Calu3 (cell line): ENCODE measurements at regions of chr15 and their contacts with region 1.

Region 1: DNA sequence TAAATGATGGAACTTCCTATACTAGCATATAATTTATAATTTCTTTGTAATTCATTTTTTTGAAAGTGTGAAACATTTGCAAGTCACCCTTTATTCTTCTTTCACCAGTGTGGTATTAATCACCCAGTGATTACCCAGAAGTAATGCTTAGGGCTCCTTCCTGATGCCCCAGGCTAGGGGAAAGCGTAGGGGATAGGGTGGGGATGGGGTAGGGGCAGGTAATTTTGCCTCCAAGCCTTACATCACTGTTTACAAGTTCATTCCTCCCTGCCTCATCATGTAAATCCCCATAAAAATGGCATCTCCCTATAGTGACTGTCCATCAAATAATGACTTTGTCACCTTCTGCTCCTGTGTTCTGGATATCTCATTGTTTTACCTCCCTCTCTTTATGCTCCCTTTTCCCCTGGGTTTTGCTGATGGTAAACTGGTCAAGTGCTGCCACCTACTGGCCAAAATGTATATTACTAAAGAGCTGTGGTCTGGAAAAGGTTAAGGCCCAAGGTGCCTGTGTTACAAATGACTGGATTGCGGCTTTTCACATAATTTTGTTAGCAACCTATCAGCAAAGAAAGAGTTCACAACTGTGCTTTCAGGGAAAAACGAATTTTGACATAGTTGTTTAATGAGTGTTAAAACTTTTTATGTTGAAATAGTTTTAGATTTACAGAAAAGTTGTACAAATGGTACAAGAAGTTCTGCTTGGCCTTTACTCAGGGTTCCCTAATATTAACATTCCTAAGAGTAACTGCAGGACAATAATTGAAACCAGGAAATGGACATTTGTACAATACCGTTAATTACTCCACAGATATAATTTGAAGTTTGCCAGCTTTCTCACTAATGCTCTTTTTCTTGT is 54.7 kb downstream of the ONECUT1 start:
- DNase-seq: peak; percentile 78
- H3K4me3 Mint-ChIP-seq: no peak overlapping the region
- H3K27ac Mint-ChIP-seq: no peak overlapping the region
- H3K4me1 Mint-ChIP-seq: peaks cover 2% of the 10 kb centered on the region
- H3K27me3 Mint-ChIP-seq: no peaks in the 10 kb centered on the region
- CTCF ChIP-seq: no peak

Region 2: DNA sequence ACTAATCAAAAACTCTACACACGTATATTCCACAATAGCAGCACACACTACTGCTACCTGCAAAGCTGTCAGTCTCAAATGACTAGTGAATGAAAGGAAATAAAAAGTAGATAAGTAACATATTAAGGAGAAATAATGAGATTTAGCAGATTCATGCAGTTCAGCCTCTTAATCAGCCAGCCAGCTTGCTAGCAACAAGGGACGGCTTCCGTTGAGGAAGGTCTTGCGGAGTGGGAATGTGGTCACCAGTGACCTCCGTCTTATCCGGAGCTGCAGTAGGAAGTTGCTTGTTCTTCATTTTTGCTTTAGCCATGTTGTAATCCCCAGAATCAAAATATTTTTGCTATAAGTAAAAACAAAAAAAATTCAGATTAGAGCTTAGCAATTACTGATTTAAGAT is 183.7 kb before region 1 on chr15:
- CTCF ChIA-PET with region 1: no interaction called
- intact Hi-C with region 1: no loop called
- DNase-seq: no peak
- H3K4me3 Mint-ChIP-seq: no peak overlapping the region
- H3K27ac Mint-ChIP-seq: no peak overlapping the region
- H3K4me1 Mint-ChIP-seq: no peaks in the 10 kb centered on the region
- H3K27me3 Mint-ChIP-seq: no peaks in the 10 kb centered on the region
- CTCF ChIP-seq: no peak

Region 3: DNA sequence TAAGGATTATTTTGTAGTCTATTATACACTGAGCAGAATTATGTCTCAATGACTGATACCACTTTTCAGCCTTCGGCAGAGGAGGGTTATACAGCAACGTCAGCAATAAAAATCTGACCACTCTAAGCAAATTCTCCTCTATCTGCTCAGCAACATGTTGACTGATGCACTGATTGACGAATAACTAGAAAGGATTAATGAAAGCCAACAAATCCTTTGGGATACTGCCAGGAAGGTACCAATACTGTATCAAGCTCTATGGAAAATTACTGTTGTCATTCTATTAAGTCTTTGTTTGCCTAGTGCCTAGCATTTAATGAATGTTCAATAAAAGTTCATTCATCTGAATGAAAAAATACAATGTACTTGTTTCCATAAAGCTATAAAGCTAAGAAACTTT is 171.9 kb before region 1 on chr15:
- CTCF ChIA-PET with region 1: no interaction called
- intact Hi-C with region 1: loop called (anchors 5 kb)
- DNase-seq: no peak
- H3K4me3 Mint-ChIP-seq: no peak overlapping the region
- H3K27ac Mint-ChIP-seq: no peak overlapping the region
- H3K4me1 Mint-ChIP-seq: peaks cover 15% of the 10 kb centered on the region
- H3K27me3 Mint-ChIP-seq: no peaks in the 10 kb centered on the region
- CTCF ChIP-seq: no peak

Region 4: DNA sequence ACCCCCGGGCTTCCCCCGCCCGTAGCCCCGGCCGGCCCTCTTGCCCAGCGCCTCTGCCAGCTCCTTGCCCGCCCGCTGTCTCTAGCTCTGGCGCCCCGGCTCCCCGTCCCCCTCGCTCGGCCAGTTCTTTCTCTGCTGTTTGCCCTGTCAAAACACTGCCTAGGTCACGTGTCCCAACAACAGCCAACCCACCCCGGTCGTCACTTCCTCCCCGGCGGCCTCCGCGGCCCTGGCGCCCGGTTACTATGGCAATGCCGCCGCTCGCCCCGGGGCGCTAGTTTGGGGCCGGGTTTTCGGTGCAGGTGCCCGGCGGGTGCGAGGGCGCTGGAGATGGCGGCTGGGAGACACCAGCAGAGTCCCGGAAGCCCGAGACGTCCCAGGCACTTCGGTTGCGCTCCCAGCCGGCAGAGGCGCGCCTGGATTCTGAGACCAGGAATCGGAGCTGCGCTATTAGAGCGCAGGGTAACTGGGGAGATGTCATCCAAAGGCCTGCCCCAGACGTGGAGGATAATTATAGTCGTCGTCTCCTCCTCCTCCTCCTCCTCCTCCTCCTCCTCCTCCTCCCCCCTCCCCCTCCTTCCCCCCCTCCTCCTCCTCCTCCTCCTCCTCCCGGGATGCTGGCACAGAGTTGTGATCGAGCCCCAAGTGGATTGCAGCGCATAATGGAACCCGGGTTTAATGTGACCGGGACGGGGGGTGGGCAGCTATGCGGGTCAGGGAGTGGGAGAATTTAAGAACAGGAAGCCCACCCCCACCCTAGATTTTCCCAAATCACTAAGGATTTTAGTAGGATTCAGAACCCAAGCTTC is 56.0 kb before region 1 on chr15 and contains the start of gene ATOSA:
- CTCF ChIA-PET with region 1: no interaction called
- intact Hi-C with region 1: no loop called
- DNase-seq: peak; percentile 90
- H3K4me3 Mint-ChIP-seq: peak within 1 kb of the TSS; percentile 100
- H3K27ac Mint-ChIP-seq: peak within 1 kb of the TSS; percentile 95
- H3K4me1 Mint-ChIP-seq: peaks cover 17% of the 10 kb centered on the region
- H3K27me3 Mint-ChIP-seq: no peaks in the 10 kb centered on the region
- CTCF ChIP-seq: no peak
- total RNA-seq, gene ATOSA: 21.8 and 22.2 TPM in 2 replicates

Region 5: DNA sequence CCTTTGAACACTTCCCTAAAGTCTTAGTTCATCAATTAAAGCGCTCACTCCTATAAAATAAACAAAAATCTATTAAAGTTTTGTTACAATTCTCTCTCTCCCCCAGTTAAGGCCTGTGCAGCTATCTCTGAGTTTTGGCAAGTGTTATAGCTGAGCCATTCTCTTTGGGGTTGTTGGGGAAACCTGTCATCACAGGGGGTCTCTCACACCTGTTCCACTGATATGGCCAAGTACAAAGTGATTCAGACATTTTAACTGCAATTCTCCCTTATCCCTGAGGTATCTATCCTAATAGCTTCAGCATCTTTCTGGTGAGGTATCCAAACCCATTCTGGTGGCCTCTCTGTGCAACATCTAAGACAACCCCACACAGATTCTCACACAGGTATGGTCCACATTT is 1359.2 kb after region 1 on chr15:
- CTCF ChIA-PET with region 1: no interaction called
- intact Hi-C with region 1: no loop called
- DNase-seq: no peak
- H3K4me3 Mint-ChIP-seq: no peak overlapping the region
- H3K27ac Mint-ChIP-seq: no peak overlapping the region
- H3K4me1 Mint-ChIP-seq: no peaks in the 10 kb centered on the region
- H3K27me3 Mint-ChIP-seq: no peaks in the 10 kb centered on the region
- CTCF ChIP-seq: no peak